Activated CD4-positive, alpha-beta memory T cell treated with anti-CD3 and anti-CD28 coated beads, Interleukin-2, amount 10 ng/mL, durations not matched to agents 7 days and 5 days (primary cell): ENCODE measurements at regions of chr20 and their contacts with region 1.

Region 1: DNA sequence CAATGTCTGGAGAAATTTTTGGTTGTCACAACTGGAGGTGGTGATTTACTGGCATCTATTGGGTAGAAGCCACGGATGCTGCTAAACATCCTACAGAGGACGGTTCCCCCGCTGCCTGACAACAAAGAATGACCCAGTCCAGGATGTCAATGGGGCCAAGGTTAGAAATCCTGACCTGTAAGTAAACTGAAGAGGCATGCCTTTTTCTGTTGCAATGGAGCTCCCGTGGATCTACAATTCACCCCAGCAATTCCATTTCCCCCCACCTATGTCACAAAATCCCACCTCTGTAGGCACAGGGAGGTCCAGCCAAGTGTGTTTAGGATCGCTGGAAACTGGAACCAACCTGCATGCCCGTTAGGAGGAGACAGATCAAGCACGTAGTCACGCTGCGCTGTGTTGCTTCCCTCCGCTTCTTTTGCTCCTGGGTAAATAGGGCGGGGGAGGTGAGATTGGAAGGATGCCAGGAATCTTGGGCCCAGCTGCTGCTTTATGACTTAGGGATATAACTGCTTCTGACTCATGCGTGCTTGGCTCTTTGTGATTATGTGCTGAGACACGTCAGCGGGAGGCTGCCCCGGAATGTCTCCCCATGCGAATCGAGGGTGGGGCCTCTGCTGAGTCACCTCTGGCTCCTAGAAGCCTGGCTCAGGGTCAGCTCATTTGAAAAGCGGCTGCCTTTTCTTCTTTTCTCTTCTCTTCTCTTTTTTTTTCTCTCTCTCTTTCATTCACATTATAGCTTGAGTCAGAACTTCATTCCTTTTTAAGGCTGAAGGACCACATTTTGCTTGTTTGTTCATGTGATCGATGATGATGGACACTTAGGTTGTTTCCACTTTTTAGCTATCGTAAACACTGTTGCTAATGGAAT is 12.4 kb upstream of the PEDS1 start:
- DNase-seq: peak; percentile 87
- H3K4me3 Mint-ChIP-seq: peak overlapping the region; percentile 76
- H3K27ac Mint-ChIP-seq: peak overlapping the region; percentile 84
- H3K4me1 Mint-ChIP-seq: peaks cover 16% of the 10 kb centered on the region
- H3K27me3 Mint-ChIP-seq: peaks cover 4% of the 10 kb centered on the region

Region 2: DNA sequence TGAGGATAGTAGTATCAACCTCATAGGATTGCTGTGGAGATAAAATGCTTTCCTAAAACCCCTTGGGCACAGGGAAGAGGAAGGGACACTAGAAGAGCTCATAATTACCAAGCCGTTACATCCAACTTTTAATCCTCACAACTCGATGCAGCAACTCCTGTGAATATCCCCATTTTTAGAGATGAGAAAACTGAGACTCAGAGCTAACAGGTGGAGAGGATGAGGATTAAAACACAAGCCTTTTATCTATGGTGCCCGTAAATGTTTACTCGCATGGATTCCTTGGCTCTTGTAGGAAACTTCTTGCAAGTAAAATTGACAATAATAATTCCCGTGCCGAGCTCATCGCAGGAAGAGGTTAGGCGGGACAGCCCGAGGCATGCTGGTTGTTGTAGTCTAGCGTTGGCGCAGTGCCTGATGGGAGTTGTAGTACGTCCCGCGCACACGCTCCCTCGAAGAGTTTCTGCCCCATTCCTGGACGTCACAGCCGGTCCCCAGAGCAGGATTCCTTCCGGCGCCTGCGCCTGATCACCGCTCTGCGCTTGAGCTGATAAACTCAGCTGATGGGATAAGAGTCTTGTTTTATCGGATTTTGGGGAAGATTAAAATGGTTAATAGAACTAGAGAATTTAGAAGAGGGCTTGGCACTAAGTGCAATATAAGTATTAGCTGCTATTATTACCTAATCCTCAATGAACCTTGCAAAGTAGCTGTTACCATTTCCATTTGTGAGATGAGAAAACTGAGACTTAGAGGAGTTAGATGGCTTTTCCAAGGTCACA is 50.1 kb before region 1 on chr20:
- CTCF ChIA-PET with region 1: interaction called, 157 read pairs
- POLR2A ChIA-PET with region 1: interaction called, 11 read pairs
- DNase-seq: peak; percentile 91
- H3K4me3 Mint-ChIP-seq: peak overlapping the region; percentile 80
- H3K27ac Mint-ChIP-seq: peak overlapping the region; percentile 85
- H3K4me1 Mint-ChIP-seq: peaks cover 52% of the 10 kb centered on the region
- H3K27me3 Mint-ChIP-seq: no peaks in the 10 kb centered on the region

Region 3: DNA sequence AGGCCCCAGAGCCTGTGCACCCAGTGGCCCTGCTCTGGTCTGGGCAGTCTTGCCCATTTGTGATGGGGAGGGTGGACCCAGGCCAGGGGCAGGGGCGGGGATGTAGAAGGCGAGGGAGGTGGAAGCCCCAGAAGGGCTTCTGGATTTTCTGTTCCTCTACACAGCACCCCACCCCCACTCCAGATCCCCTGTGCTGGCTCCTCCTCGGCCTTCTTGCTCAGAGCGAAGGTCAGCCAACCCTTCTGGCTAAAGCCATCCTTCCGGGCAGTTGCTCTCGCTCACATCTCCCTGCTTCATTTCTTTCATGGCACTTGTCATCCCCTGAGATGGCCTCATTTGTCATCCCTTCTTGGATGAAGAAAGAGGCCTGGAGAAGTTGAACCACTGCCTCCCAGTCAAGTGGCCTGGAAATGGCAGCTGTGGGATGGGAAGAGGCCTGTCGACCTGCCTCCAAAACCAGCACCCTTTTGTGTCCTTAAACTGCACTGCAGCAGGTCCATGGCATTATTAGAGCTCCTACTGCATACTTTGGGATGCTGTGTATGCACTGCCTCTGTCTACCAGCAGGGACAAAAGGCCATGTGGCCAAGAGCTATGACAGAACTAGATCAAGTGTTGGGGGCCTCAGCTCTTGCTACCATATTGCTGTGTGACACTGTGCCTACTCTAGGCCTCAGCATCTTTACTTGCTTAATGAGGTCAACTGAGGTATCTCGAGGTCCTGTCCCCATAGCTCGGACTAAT is 32.3 kb before region 1 on chr20:
- CTCF ChIA-PET with region 1: interaction called, 10 read pairs
- POLR2A ChIA-PET with region 1: interaction called, 3 read pairs
- DNase-seq: no peak
- H3K4me3 Mint-ChIP-seq: no peak overlapping the region
- H3K27ac Mint-ChIP-seq: no peak overlapping the region
- H3K4me1 Mint-ChIP-seq: peaks cover 2% of the 10 kb centered on the region
- H3K27me3 Mint-ChIP-seq: no peaks in the 10 kb centered on the region

Region 4: GRCh38 chr20:50153485-50154377 is 12.2 kb before region 1 on chr20 and contains the start of gene PEDS1:
- CTCF ChIA-PET with region 1: interaction called, 38 read pairs
- POLR2A ChIA-PET with region 1: interaction called, 28 read pairs
- DNase-seq: peak; percentile 88
- H3K4me3 Mint-ChIP-seq: peak within 1 kb of the TSS; percentile 81
- H3K27ac Mint-ChIP-seq: peak within 1 kb of the TSS; percentile 78
- H3K4me1 Mint-ChIP-seq: peaks cover 48% of the 10 kb centered on the region
- H3K27me3 Mint-ChIP-seq: no peaks in the 10 kb centered on the region
- total RNA-seq, gene PEDS1: 30.3 to 32.3 TPM